Natural killer cell (primary cell): ENCODE measurements at regions of chr2 and their contacts with region 1.

Region 1: DNA sequence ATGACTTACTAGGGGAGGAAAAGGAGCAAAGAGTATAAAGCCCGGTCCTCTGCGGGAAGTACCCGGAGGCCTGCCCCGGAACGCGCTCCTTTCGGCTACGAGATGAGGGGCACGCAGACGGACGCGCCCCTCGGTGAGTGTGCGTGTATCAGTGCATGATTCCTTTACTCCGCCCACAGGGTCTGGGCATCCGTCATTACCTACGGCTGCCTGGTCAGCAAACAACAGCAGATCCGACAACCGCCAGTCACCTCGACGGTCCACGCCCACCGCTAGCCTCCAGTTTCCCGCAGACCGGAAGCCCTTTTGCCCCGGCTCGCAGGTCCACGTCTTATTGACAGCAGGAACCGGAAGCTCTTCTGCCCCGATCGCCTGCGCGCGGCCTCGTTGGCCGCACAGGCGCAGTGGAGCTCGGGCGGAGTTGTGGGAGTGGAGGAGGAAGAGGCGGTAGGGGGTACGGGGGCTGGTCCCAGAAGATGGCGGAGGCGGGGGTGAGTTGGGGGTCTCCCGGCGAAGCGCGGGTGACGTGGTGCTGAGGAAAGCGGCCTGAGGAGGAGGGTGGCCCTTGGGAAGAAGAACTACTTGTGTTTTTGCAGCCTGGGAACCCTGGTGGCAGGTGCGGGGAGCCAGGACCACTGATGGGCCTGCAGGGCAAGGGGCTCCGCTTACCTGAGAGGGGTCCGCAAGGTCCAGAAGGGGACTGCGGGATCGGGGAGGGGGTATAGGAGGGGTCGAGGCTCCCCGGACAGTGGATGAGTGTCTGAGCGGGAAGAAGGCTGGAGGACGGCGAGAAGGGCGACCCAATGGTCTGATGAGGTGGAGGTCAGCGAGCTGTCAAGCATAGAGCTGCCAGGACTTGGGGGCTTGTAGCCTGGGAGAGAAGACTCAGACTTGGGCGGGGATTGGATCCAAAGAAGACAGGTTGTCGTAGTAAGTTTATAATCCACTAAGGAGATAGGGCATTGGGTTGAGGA is at the start of gene INSIG2:
- DNase-seq: peak; percentile 82 to 94
- ATAC-seq: peak; percentile 91 to 96 (median 93)
- H3K4me3 ChIP-seq: peak within 1 kb of the TSS; percentile 82
- H3K4me3 Mint-ChIP-seq: peak within 1 kb of the TSS; percentile 86
- H3K27ac ChIP-seq: peak within 1 kb of the TSS; percentile 81
- H3K27ac Mint-ChIP-seq: peak within 1 kb of the TSS; percentile 59 to 93
- H3K4me1 ChIP-seq: peaks cover 7% of the 10 kb centered on the region
- H3K4me1 Mint-ChIP-seq: peaks cover 4 to 21% of the 10 kb centered on the region in 2 donors
- H3K27me3 ChIP-seq: no peaks in the 10 kb centered on the region
- H3K27me3 Mint-ChIP-seq: peaks cover 8% of the 10 kb centered on the region in 2 donors
- CTCF ChIP-seq: no peak
- total RNA-seq, gene INSIG2: 9.5 to 20.5 (median 13.9) TPM

Region 2: GRCh38 chr2:117801826-117802225 is 286.5 kb before region 1 on chr2:
- intact Hi-C with region 1: no loop called
- DNase-seq: no peak
- ATAC-seq: no peak
- H3K4me3 ChIP-seq: no peak overlapping the region
- H3K4me3 Mint-ChIP-seq: no peak overlapping the region
- H3K27ac ChIP-seq: no peak overlapping the region
- H3K27ac Mint-ChIP-seq: no peak overlapping the region
- H3K4me1 ChIP-seq: no peaks in the 10 kb centered on the region
- H3K4me1 Mint-ChIP-seq: no peaks in the 10 kb centered on the region
- H3K27me3 ChIP-seq: peaks cover 8% of the 10 kb centered on the region
- H3K27me3 Mint-ChIP-seq: peaks cover 30 to 40% of the 10 kb centered on the region in 2 donors
- CTCF ChIP-seq: no peak

Region 3: DNA sequence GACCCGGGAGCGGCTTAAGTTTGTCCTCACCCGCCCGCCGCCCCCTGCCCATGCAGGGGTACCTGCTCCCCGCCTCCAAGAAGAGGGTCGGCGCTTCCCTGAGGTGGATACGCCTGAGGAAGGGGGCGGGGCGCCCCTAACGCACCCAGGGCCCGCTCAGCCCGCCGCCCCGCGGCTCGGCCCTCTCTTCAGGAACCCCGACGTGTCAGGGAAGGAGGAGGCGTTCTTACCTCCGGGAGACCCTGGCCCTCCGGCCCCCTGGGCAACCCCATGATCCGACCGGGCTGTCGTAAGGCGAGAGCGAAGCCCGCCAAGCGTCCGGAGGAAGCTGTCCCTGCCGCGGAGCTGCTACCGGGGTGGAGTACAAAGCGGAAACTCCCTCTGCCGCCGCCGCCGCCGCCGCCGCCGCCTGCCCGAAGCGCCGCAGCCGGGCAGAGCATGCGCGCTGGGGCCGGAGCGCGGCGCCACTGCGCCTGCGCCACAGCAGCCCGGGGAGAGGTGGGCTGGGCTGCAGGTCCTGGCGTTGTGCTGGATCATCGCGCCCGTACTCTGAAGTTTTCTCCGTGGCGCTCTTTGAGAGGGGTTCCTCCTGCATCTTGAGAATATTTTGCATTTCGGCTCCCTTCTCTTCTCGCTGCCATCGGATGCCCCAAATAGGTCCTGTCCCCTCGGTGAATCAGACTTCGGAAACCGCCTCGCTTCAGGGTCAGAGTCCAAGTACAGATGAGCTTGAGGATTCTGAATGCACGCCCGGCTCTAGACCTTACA is 74.4 kb before region 1 on chr2 and contains the start of gene CCDC93:
- intact Hi-C with region 1: loop called (anchors 2 kb)
- DNase-seq: peak; percentile 86 to 94
- ATAC-seq: peak; percentile 85 to 93 (median 89)
- H3K4me3 ChIP-seq: peak within 1 kb of the TSS; percentile 100
- H3K4me3 Mint-ChIP-seq: peak within 1 kb of the TSS; percentile 89
- H3K27ac ChIP-seq: peak within 1 kb of the TSS; percentile 99
- H3K27ac Mint-ChIP-seq: peak within 1 kb of the TSS; percentile 81 to 85
- H3K4me1 ChIP-seq: peaks cover 16% of the 10 kb centered on the region
- H3K4me1 Mint-ChIP-seq: peaks cover 25 to 30% of the 10 kb centered on the region in 2 donors
- H3K27me3 ChIP-seq: no peaks in the 10 kb centered on the region
- H3K27me3 Mint-ChIP-seq: peaks cover 13 to 23% of the 10 kb centered on the region in 2 donors
- CTCF ChIP-seq: no peak
- total RNA-seq, gene CCDC93: 58.6 to 68.6 (median 67.4) TPM

Region 4: DNA sequence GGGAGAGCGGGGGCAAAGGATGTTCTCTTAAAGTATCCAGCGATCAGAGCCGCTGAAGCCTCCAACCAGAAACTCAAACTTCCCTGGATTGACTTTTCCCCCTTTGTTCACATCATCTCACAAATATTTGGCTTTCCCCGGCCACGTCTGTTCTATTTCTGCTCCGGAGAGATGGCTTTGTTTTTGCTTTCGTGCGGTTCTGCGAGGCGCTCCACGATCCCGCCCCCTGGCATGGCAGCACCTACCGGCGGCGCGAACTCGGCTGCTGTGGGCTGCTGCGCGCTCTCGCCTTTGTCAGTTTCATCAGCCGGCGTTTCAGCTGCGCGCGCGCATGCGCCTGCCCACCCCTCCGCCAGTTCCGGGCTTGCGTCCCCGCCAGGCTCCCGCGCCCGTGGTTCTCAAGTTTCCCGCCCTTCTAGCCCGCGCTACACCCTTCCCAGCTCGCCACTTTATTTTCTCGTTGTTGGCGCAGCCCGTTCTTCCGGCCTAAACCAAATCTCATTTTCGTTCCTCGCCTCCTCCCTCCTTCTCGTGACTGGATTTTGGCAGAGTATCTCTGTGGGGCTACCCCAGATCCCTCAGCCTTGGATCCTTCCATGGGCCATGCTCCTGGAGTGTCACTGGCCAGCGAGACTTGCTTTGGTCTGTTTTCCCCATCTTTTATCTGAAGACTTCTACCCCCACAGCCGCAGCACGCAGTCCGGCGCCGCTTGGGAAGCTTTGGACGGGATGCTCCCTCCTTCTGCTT is 97.9 kb after region 1 on chr2:
- intact Hi-C with region 1: loop called (anchors 5 kb)
- DNase-seq: peak; percentile 83 to 94
- ATAC-seq: peak; percentile 92 to 94 (median 93)
- H3K4me3 ChIP-seq: peak overlapping the region; percentile 88
- H3K4me3 Mint-ChIP-seq: peak overlapping the region; percentile 97
- H3K27ac ChIP-seq: peak overlapping the region; percentile 86
- H3K27ac Mint-ChIP-seq: peak overlapping the region; percentile 93 to 97
- H3K4me1 ChIP-seq: peaks cover 16% of the 10 kb centered on the region
- H3K4me1 Mint-ChIP-seq: peaks cover 18 to 19% of the 10 kb centered on the region in 2 donors
- H3K27me3 ChIP-seq: no peaks in the 10 kb centered on the region
- H3K27me3 Mint-ChIP-seq: peaks cover 0 to 3% of the 10 kb centered on the region in 2 donors
- CTCF ChIP-seq: no peak

Region 5: DNA sequence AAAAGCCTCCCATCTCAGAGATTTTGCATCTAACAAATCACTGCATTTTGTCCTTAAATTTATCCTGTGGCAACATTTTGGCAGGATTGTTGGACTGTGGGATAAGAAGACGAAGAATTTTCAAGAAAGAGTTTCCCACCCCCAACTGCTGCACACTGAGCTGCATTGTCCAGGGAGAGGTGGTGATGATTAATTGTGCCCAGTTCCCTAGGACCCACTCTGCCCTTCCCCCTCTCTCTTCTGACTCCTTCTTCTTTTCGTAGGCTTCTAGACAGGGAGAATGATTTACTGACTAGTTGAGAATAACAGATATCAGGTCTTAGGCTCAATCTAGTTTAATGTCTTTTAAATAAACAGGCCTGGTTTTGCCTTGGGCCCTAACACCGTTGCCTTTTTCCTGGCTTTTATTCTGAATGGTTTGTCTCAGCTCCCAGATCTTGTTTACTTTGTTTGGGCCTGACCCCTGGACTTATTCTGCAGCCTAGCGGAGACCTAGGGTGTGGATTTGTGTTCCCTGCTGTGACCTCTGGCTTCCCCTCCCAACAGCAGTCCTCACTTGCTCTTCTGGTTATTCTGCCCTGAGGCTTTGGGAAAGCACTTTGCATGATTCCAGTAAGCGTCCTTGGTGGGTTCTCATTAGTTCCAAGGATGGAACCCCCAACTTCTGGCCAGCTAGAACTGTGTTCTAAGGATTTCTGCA is 233.2 kb after region 1 on chr2:
- intact Hi-C with region 1: no loop called
- DNase-seq: no peak
- ATAC-seq: no peak
- H3K4me3 ChIP-seq: no peak overlapping the region
- H3K4me3 Mint-ChIP-seq: no peak overlapping the region
- H3K27ac ChIP-seq: no peak overlapping the region
- H3K27ac Mint-ChIP-seq: no peak overlapping the region
- H3K4me1 ChIP-seq: no peaks in the 10 kb centered on the region
- H3K4me1 Mint-ChIP-seq: no peaks in the 10 kb centered on the region
- H3K27me3 ChIP-seq: no peaks in the 10 kb centered on the region
- H3K27me3 Mint-ChIP-seq: peaks cover 16 to 30% of the 10 kb centered on the region in 2 donors
- CTCF ChIP-seq: no peak